ENCODE measurements at regions of chr2 and their contacts with region 1.

Region 1: GRCh38 chr2:72973566-72974435 is 56.5 kb downstream of the EMX1 start:
- DNase-seq: no peak
- H3K4me3 ChIP-seq: no peak overlapping the region
- CTCF ChIP-seq: peak; percentile 91

Region 2: DNA sequence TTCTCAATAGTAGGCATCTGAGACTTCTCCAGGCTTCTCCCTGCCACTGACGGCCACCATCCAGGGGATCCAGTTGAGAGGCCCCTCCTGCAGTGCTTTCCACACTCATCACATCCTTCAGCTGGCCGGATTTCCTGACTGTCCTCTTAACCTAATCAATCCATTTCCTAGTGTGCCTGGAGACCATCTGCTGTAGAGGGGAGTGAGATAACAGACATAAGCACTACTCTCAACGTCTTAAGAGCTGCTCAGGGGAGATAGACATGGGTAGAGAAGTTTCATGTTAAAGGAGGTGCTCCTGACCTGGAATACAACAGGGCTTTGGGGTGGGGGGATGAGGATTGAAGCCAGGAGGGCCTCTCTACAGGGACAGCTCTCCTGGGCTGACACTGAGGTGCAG is 72.4 kb before region 1 on chr2:
- CTCF ChIA-PET with region 1: interaction called, 502 read pairs
- POLR2A ChIA-PET with region 1: no interaction called
- DNase-seq: no peak
- H3K4me3 ChIP-seq: no peak overlapping the region
- CTCF ChIP-seq: no peak

Region 3: GRCh38 chr2:72940786-72941185 is 33.0 kb before region 1 on chr2:
- CTCF ChIA-PET with region 1: interaction called, 19 read pairs
- POLR2A ChIA-PET with region 1: no interaction called
- DNase-seq: peak; percentile 56
- H3K4me3 ChIP-seq: no peak overlapping the region
- CTCF ChIP-seq: no peak

Region 4: GRCh38 chr2:72963423-72964145 is 10.2 kb before region 1 on chr2:
- CTCF ChIA-PET with region 1: interaction called, 40 read pairs
- POLR2A ChIA-PET with region 1: no interaction called
- DNase-seq: no peak
- H3K4me3 ChIP-seq: no peak overlapping the region
- CTCF ChIP-seq: no peak

Region 5: GRCh38 chr2:73006969-73007710 is 33.3 kb after region 1 on chr2:
- CTCF ChIA-PET with region 1: interaction called, 10 read pairs
- POLR2A ChIA-PET with region 1: no interaction called
- DNase-seq: no peak
- H3K4me3 ChIP-seq: no peak overlapping the region
- CTCF ChIP-seq: no peak

Region 6: DNA sequence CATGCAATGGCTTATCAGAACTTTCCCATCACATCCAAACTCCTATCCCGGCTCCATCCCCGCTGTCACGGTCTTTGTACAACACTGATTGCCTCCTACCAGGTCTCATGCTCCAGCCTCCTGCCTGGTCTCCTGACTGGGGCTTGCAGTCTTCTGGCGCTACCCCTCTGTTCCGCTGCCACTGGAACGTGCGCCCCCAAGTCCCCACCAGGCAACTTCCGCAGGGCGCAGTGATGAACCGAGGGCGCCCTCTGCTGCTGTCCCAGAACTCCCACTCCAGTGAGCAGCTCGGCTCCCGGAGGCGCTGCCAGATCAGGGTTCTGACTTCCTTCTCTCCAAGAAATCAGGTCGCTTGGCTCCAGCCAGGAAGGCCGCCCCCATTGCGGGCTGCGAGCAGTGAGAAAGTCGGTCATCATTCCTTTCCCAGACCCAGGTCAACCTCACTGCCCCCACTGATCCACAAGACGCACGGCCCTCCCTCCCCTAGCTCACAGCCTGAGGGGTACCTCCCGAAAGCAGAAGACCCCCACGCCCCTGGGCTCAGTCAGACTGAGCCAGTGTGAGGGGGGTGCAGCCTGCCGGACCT is 182.8 kb after region 1 on chr2:
- CTCF ChIA-PET with region 1: interaction called, 18 read pairs
- POLR2A ChIA-PET with region 1: no interaction called
- DNase-seq: no peak
- H3K4me3 ChIP-seq: peak overlapping the region; percentile 44
- CTCF ChIP-seq: peak; percentile 96